ENCODE measurements at regions of chr18 and their contacts with region 1.

Region 1: DNA sequence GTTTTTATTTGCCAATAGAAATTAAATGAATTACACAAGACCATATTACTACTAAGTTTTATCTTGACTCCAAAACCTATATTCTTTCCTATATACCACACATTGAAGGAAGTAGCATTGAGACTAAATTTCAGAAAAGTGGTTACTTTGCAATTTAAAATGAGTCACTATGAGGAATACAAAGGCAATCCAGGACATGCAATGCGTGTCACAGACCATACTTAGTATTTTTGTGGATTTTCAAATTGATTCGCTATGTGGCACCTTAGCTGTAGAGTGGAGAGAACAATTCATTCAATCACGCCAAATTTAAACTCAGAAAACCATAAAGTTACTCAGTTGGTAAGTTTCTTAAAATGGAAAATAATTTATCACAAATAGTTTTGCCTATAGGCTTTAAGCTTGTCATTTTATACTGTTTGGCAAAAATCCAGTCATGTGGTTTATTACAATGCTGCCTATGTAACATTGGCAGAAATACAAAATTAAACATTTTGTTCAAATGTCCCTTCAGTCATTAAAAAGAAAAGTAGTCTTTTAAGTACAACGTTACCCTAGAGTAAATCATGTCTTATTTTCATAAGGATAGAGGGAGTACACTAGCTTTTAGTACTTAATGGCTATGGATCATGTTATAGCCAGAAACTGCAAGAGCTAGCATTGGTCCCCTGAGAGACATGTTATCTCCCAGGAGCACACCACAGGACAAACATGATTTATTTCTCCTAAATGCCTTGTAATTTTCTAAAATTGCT is 222.8 kb upstream of the CDH7 start:
- DNase-seq: no peak
- ATAC-seq: no peak
- H3K4me3 ChIP-seq: no peak overlapping the region
- H3K27ac ChIP-seq: no peak overlapping the region
- H3K4me1 ChIP-seq: no peaks in the 10 kb centered on the region
- H3K27me3 ChIP-seq: no peaks in the 10 kb centered on the region
- CTCF ChIP-seq: no peak

Region 2: GRCh38 chr18:65567372-65567771 is 39.3 kb after region 1 on chr18:
- intact Hi-C with region 1: loop called in 1 of 2 experiments (anchors 2 kb)
- DNase-seq: no peak
- ATAC-seq: no peak
- H3K4me3 ChIP-seq: no peak overlapping the region
- H3K27ac ChIP-seq: no peak overlapping the region
- H3K4me1 ChIP-seq: no peaks in the 10 kb centered on the region
- H3K27me3 ChIP-seq: no peaks in the 10 kb centered on the region
- CTCF ChIP-seq: no peak

Region 3: GRCh38 chr18:65632236-65632635 is 104.2 kb after region 1 on chr18:
- intact Hi-C with region 1: no loop called
- DNase-seq: no peak
- ATAC-seq: no peak
- H3K4me3 ChIP-seq: no peak overlapping the region
- H3K27ac ChIP-seq: no peak overlapping the region
- H3K4me1 ChIP-seq: no peaks in the 10 kb centered on the region
- H3K27me3 ChIP-seq: no peaks in the 10 kb centered on the region
- CTCF ChIP-seq: no peak

Region 4: GRCh38 chr18:65704046-65704445 is 176.0 kb after region 1 on chr18:
- intact Hi-C with region 1: no loop called
- DNase-seq: no peak
- ATAC-seq: no peak
- H3K4me3 ChIP-seq: no peak overlapping the region
- H3K27ac ChIP-seq: no peak overlapping the region
- H3K4me1 ChIP-seq: no peaks in the 10 kb centered on the region
- H3K27me3 ChIP-seq: no peaks in the 10 kb centered on the region
- CTCF ChIP-seq: no peak

Region 5: DNA sequence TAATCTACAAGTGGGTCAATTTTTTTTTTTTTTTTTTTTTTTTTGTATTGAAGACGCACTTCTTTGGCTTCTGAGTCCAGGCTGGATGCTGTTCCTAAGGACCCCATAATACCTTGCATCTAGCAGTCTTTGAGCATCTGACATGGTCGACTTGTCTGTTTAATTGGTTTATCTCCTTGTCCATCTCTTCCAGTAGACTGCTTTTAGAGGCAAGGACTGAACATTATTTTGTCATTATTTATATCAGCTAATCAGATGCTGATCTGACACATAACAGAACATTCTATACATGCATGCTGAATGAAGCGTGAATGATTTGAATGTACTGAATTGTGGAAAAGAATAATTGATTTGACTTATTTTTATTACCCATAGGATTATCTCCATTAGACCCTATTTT is 341.5 kb after region 1 on chr18:
- intact Hi-C with region 1: no loop called
- DNase-seq: no peak
- ATAC-seq: no peak
- H3K4me3 ChIP-seq: no peak overlapping the region
- H3K27ac ChIP-seq: no peak overlapping the region
- H3K4me1 ChIP-seq: no peaks in the 10 kb centered on the region
- H3K27me3 ChIP-seq: no peaks in the 10 kb centered on the region
- CTCF ChIP-seq: no peak

Measured in psoas muscle (tissue), 8 donors.